IMR-90 (cell line): ENCODE measurements at regions of chr2 and their contacts with region 1.

Region 1: GRCh38 chr2:233832869-233833311 is 21.4 kb downstream of the HJURP start:
- DNase-seq: peak; percentile 73
- ATAC-seq: peak; percentile 73
- H3K4me3 ChIP-seq: no peak overlapping the region
- H3K27ac ChIP-seq: 0 out of 2 replicates have a peak overlapping the region, but pooled peaks have one; percentile 8
- H3K4me1 ChIP-seq: peaks cover 3% of the 10 kb centered on the region
- H3K27me3 ChIP-seq: no peaks in the 10 kb centered on the region
- CTCF ChIP-seq: peak; percentile 50
- POLR2A ChIP-seq: no peak
- RAD21 ChIP-seq: peak; percentile 51

Region 2: GRCh38 chr2:233449081-233449901 is 383.6 kb before region 1 on chr2:
- CTCF ChIA-PET with region 1: interaction called, 4 read pairs
- POLR2A ChIA-PET with region 1: no interaction called
- dilution Hi-C with region 1: no loop called
- in situ Hi-C with region 1: loop called (anchors 25 kb)
- intact Hi-C with region 1: loop called (anchors 1 kb)
- DNase-seq: peak; percentile 48
- ATAC-seq: peak; percentile 94
- H3K4me3 ChIP-seq: no peak overlapping the region
- H3K27ac ChIP-seq: no peak overlapping the region
- H3K4me1 ChIP-seq: no peaks in the 10 kb centered on the region
- H3K27me3 ChIP-seq: no peaks in the 10 kb centered on the region
- CTCF ChIP-seq: peak; percentile 82
- POLR2A ChIP-seq: no peak
- RAD21 ChIP-seq: peak; percentile 79

Region 3: DNA sequence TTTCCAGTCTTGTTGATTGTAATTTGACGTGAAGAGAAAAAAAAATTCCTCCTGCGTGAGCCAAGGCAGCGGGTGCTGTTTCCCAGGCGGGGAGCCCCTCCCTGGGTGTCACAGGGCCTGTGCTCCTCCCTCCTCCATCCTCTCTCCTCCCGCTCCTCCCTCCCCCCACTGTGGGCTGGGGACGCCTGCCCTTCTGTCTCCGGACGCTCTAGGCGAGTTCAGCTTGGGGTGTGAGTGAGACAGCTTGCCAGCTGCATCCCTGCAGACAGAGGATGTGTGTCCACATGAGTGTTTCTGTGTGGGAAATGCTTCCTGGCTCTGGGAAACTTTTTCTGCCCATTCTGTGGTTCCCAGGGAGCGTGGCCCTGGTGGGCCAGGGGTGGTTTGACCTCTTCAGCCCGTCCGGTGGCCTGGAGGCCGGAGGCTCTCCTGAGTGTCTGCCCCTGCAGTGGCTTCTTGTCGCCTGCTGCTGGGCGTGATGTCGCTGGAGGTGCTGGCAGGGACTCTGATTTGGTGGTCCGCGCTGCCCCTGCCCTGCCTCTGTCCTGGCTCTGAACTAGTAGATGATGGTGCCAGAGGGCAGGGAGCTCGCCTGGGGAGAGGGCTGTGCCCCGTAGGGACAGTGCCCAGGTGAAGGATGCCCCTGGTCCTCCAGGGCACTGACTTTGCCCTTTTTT is 362.7 kb before region 1 on chr2:
- CTCF ChIA-PET with region 1: no interaction called
- POLR2A ChIA-PET with region 1: no interaction called
- dilution Hi-C with region 1: no loop called
- in situ Hi-C with region 1: loop called (anchors 25 kb)
- intact Hi-C with region 1: no loop called
- DNase-seq: no peak
- ATAC-seq: no peak
- H3K4me3 ChIP-seq: no peak overlapping the region
- H3K27ac ChIP-seq: no peak overlapping the region
- H3K4me1 ChIP-seq: peaks cover 5% of the 10 kb centered on the region
- H3K27me3 ChIP-seq: no peaks in the 10 kb centered on the region
- CTCF ChIP-seq: no peak
- POLR2A ChIP-seq: no peak
- RAD21 ChIP-seq: no peak

Region 4: DNA sequence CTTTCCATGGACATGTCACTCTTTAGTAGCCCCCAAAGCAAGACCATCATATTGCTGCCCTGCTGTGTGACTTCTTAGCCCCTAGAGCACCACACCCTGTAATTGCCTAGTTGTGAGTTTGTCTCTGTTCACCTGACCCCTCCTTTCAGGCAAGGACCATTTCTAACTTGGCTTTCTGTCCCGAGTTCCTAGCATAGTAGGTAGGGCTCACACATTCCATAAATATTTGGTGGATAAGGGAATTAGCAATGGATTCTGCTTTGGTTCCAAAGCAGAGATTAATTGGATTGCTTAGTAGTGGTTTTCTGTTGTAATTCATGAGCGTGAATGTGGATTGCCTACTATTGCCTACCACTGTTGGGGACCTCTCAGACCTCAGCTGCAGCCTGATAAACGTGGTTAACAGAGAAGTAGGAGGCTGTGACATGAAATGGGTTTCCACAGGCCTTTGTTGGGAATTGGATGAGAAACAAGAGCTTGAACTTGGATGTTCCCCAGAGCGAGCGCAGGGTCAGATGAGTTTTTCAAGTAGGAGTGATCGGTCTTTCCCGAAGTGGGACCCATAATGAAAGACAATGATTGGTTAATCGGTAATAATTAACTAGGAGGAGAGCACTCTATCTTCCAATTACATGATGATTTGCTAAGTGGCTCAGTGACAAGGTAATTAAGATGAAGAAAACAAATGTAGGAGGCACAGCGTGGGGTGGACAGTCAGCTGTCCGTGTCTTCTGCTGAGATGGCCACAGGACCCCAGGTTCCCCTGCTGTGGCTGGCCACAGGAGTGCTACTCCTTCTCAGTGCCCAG is 86.2 kb before region 1 on chr2:
- CTCF ChIA-PET with region 1: no interaction called
- POLR2A ChIA-PET with region 1: no interaction called
- dilution Hi-C with region 1: no loop called
- in situ Hi-C with region 1: no loop called
- intact Hi-C with region 1: no loop called
- DNase-seq: no peak
- ATAC-seq: no peak
- H3K4me3 ChIP-seq: no peak overlapping the region
- H3K27ac ChIP-seq: no peak overlapping the region
- H3K4me1 ChIP-seq: no peaks in the 10 kb centered on the region
- H3K27me3 ChIP-seq: no peaks in the 10 kb centered on the region; the same call in 1 of the 2 replicates
- CTCF ChIP-seq: no peak
- POLR2A ChIP-seq: no peak
- RAD21 ChIP-seq: no peak

Region 5: GRCh38 chr2:233867993-233868532 is 35.2 kb after region 1 on chr2 and contains the start of gene MSL3B:
- CTCF ChIA-PET with region 1: no interaction called
- POLR2A ChIA-PET with region 1: no interaction called
- dilution Hi-C with region 1: no loop called
- in situ Hi-C with region 1: no loop called
- intact Hi-C with region 1: no loop called
- DNase-seq: peak; percentile 42
- ATAC-seq: peak; percentile 70
- H3K4me3 ChIP-seq: peak within 1 kb of the TSS; percentile 71
- H3K27ac ChIP-seq: peak within 1 kb of the TSS; percentile 81
- H3K4me1 ChIP-seq: no peaks in the 10 kb centered on the region
- H3K27me3 ChIP-seq: no peaks in the 10 kb centered on the region
- CTCF ChIP-seq: no peak
- POLR2A ChIP-seq: no peak
- RAD21 ChIP-seq: no peak